ENCODE measurements at regions of chr21 and their contacts with region 1.

Region 1: DNA sequence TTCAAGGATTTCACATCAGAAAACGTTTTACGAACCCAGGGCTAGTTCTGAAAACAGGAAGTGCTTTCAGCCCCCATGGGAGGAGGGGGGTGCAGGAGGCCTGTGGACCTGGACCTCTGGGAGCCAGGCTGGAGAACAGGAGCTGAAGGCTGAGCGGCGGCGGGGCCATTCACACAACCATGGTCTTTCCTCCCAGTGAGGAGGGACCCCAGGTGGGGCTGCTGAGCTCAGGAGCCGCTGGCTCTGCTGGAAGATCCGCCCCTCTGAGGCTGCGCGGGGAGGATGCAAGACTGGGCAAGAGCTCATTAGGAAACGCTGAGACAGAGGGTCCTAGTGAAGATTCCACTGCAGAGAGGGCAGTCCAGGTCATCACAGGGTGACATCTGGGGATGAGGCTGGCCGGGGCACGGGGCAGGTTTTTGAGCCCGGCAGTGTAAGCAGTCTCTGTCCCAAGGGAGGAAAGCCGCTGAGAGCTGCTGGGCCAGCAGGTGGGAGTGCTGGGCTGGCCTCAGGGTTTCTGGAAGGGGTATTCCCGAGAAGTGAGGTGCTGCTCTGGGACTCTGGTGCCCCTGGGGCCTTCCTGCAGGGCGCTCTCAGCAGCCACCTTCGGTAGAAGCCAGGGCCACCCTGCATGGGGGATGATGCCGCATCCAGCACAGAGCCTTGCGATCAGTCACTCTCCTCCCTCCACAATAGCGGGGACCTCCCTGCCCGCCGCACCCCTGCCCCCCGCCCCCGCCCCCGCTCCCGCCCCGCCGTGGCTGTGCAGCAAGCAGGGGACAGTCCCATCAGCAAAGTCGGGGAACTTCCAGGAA is 7.5 kb downstream of the MX2 start:
- DNase-seq: no peak
- H3K4me3 ChIP-seq: no peak overlapping the region
- H3K4me3 Mint-ChIP-seq: no peak overlapping the region
- H3K27ac Mint-ChIP-seq: peak overlapping the region; percentile 85
- H3K4me1 ChIP-seq: peaks cover 33% of the 10 kb centered on the region
- H3K4me1 Mint-ChIP-seq: peaks cover 21% of the 10 kb centered on the region
- H3K27me3 ChIP-seq: no peaks in the 10 kb centered on the region
- H3K27me3 Mint-ChIP-seq: no peaks in the 10 kb centered on the region
- CTCF ChIP-seq: no peak

Region 2: DNA sequence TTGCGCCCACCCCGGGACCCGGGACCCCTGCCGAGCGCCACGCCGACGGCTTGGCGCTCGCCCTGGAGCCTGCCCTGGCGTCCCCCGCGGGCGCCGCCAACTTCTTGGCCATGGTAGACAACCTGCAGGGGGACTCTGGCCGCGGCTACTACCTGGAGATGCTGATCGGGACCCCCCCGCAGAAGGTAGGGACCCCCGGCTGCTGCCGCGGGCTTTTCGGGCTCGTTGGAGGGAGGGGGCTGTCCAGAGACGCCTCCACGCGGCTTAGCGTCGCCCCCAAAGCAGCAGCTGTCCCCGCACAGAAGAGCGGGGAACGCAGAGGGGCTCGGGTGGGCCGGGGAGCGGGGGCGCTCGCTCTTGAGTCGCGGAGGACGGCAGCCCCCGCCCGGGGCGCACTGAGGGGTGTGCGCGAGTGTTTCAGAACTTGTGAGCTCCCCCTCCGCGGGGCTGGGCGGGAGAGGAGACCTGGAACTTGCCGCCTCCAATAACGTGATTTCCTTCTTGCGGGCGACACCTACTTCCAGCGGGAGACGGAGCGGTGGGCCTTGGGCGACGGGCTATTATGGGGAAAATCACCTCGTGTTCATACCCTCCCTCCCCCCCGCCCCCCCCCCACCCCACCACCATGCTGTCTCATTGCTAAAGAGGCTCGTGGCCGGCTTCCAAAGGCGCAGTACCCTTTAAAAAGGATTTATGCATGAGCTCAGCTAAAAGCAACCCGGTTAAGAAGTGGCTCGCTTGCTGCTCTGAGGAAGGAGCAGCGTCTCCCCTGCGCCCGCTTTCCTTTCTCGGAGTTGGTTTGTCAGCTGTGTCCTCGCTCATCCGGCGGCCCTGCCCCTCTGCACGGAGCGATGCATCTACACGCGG is 200.7 kb before region 1 on chr21:
- CTCF ChIA-PET with region 1: interaction called, 3 read pairs
- POLR2A ChIA-PET with region 1: interaction called, 13 read pairs
- intact Hi-C with region 1: no loop called
- DNase-seq: peak in 1 of 2 experiments; percentile 24
- H3K4me3 ChIP-seq: peak overlapping the region; percentile 51
- H3K4me3 Mint-ChIP-seq: peak overlapping the region; percentile 81
- H3K27ac Mint-ChIP-seq: no peak overlapping the region
- H3K4me1 ChIP-seq: no peaks in the 10 kb centered on the region
- H3K4me1 Mint-ChIP-seq: peaks cover 6% of the 10 kb centered on the region
- H3K27me3 ChIP-seq: no peaks in the 10 kb centered on the region
- H3K27me3 Mint-ChIP-seq: peaks cover 5% of the 10 kb centered on the region
- CTCF ChIP-seq: no peak

Region 3: GRCh38 chr21:41283211-41283818 is 86.0 kb before region 1 on chr21:
- CTCF ChIA-PET with region 1: interaction called, 10 read pairs
- POLR2A ChIA-PET with region 1: no interaction called
- intact Hi-C with region 1: loop called (anchors 2 kb)
- DNase-seq: peak; percentile 61 to 74
- H3K4me3 ChIP-seq: no peak overlapping the region
- H3K4me3 Mint-ChIP-seq: no peak overlapping the region
- H3K27ac Mint-ChIP-seq: no peak overlapping the region
- H3K4me1 ChIP-seq: no peaks in the 10 kb centered on the region
- H3K4me1 Mint-ChIP-seq: no peaks in the 10 kb centered on the region
- H3K27me3 ChIP-seq: no peaks in the 10 kb centered on the region
- H3K27me3 Mint-ChIP-seq: peaks cover 4% of the 10 kb centered on the region
- CTCF ChIP-seq: peak; percentile 79 to 82

Region 4: GRCh38 chr21:41322487-41323382 is 46.6 kb before region 1 on chr21:
- CTCF ChIA-PET with region 1: interaction called, 4 read pairs
- POLR2A ChIA-PET with region 1: interaction called, 7 read pairs
- intact Hi-C with region 1: loop called (anchors 1 kb)
- DNase-seq: peak; percentile 90 to 94
- H3K4me3 ChIP-seq: peak overlapping the region; percentile 43
- H3K4me3 Mint-ChIP-seq: peak overlapping the region; percentile 79
- H3K27ac Mint-ChIP-seq: peak overlapping the region; percentile 92
- H3K4me1 ChIP-seq: peaks cover 52% of the 10 kb centered on the region
- H3K4me1 Mint-ChIP-seq: peaks cover 28% of the 10 kb centered on the region
- H3K27me3 ChIP-seq: no peaks in the 10 kb centered on the region
- H3K27me3 Mint-ChIP-seq: no peaks in the 10 kb centered on the region
- CTCF ChIP-seq: no peak

Region 5: GRCh38 chr21:41380617-41381016 is 11.3 kb after region 1 on chr21:
- CTCF ChIA-PET with region 1: no interaction called
- POLR2A ChIA-PET with region 1: no interaction called
- intact Hi-C with region 1: no loop called
- DNase-seq: no peak
- H3K4me3 ChIP-seq: no peak overlapping the region
- H3K4me3 Mint-ChIP-seq: no peak overlapping the region
- H3K27ac Mint-ChIP-seq: no peak overlapping the region
- H3K4me1 ChIP-seq: no peaks in the 10 kb centered on the region
- H3K4me1 Mint-ChIP-seq: no peaks in the 10 kb centered on the region
- H3K27me3 ChIP-seq: no peaks in the 10 kb centered on the region
- H3K27me3 Mint-ChIP-seq: no peaks in the 10 kb centered on the region
- CTCF ChIP-seq: no peak

Region 6: DNA sequence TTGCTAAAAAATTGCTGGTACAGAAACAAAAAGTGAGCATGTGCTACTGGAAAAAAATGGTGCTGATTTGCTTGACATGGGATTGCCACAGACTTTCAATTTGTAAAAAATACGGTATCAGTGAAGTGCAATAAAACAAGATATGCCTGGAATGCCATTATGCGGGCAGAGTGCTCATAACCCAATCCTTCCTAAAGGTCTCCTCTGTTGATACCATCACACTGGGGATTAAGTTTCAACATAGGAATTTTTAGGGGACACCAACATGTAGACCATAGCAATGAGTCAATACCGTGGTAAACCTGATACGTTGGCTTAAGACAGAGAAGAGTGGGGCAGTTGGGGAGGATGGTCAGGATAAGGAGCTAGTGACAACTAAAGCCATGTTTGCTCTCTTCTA is 77.3 kb after region 1 on chr21:
- CTCF ChIA-PET with region 1: interaction called, 5 read pairs
- POLR2A ChIA-PET with region 1: no interaction called
- intact Hi-C with region 1: loop called (anchors 2 kb)
- DNase-seq: peak; percentile 70 to 72
- H3K4me3 ChIP-seq: no peak overlapping the region
- H3K4me3 Mint-ChIP-seq: no peak overlapping the region
- H3K27ac Mint-ChIP-seq: peak overlapping the region; percentile 72
- H3K4me1 ChIP-seq: peaks cover 18% of the 10 kb centered on the region
- H3K4me1 Mint-ChIP-seq: peaks cover 14% of the 10 kb centered on the region
- H3K27me3 ChIP-seq: no peaks in the 10 kb centered on the region
- H3K27me3 Mint-ChIP-seq: no peaks in the 10 kb centered on the region
- CTCF ChIP-seq: no peak

Region 7: GRCh38 chr21:41460578-41461527 is 91.5 kb after region 1 on chr21:
- CTCF ChIA-PET with region 1: interaction called, 3 read pairs
- POLR2A ChIA-PET with region 1: no interaction called
- intact Hi-C with region 1: loop called (anchors 5 kb)
- DNase-seq: peak; percentile 72 to 74
- H3K4me3 ChIP-seq: no peak overlapping the region
- H3K4me3 Mint-ChIP-seq: no peak overlapping the region
- H3K27ac Mint-ChIP-seq: no peak overlapping the region
- H3K4me1 ChIP-seq: no peaks in the 10 kb centered on the region
- H3K4me1 Mint-ChIP-seq: peaks cover 13% of the 10 kb centered on the region
- H3K27me3 ChIP-seq: no peaks in the 10 kb centered on the region
- H3K27me3 Mint-ChIP-seq: no peaks in the 10 kb centered on the region
- CTCF ChIP-seq: peak; percentile 77 to 78

Region 8: DNA sequence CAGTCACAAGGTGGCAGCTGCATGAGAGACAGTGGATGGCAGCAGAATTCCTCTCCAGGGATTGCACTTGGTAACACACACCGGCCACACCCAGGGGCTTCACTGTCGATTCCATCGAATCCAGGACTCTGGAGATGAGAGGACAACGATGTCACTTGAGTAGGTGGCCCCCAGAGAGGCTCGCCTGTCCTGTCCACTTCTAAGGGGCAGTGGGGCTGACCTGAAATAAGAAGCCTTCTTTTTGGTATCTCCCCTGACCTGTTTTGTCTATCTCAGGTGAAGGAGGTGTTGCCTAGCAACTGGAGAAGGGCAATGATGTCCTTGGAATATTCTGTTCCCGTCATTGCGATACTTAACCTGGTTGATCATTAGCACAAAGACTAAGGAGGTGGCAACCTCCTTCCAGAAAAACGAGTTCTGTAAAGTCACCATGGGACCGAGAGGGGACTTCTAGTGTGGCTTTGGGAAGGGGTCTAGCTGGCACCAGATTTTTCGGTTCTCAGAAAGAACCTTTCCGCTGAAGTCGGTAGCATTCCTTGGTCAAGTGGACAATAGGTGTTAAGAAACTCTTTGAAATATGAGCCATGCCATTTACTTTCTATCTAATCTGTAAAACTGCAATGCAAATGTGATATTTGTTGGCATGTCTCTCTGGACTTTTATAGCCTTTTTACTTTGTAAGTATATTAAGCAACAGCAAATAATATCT is 223.9 kb after region 1 on chr21:
- CTCF ChIA-PET with region 1: interaction called, 4 read pairs
- POLR2A ChIA-PET with region 1: no interaction called
- intact Hi-C with region 1: loop called (anchors 1 kb)
- DNase-seq: peak; percentile 84 to 85
- H3K4me3 ChIP-seq: no peak overlapping the region
- H3K4me3 Mint-ChIP-seq: peak overlapping the region; percentile 15
- H3K27ac Mint-ChIP-seq: peak overlapping the region; percentile 93
- H3K4me1 ChIP-seq: peaks cover 47% of the 10 kb centered on the region
- H3K4me1 Mint-ChIP-seq: peaks cover 39% of the 10 kb centered on the region
- H3K27me3 ChIP-seq: no peaks in the 10 kb centered on the region
- H3K27me3 Mint-ChIP-seq: no peaks in the 10 kb centered on the region
- CTCF ChIP-seq: no peak

Measured in Caco-2 (cell line).